ENCODE measurements at regions of chr19 and their contacts with region 1.

Region 1: DNA sequence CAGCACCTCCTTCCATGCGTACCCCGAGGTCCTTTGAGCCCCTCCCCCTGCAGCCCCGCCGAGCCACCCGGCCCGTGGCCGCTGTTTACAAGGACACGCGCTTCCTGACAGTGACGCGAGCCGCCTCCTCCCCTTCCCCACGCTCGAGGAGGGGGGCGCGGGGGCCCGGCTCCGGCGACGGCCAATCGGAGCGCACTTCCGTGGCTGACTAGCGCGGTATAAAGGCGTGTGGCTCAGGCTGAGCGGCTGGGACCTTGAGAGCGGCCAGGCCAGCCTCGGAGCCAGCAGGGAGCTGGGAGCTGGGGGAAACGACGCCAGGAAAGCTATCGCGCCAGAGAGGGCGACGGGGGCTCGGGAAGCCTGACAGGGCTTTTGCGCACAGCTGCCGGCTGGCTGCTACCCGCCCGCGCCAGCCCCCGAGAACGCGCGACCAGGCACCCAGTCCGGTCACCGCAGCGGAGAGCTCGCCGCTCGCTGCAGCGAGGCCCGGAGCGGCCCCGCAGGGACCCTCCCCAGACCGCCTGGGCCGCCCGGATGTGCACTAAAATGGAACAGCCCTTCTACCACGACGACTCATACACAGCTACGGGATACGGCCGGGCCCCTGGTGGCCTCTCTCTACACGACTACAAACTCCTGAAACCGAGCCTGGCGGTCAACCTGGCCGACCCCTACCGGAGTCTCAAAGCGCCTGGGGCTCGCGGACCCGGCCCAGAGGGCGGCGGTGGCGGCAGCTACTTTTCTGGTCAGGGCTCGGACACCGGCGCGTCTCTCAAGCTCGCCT is at the start of gene JUNB:
- DNase-seq: no peak
- ATAC-seq: peak; percentile 60
- H3K4me3 ChIP-seq: peak within 1 kb of the TSS; percentile 75 to 79
- H3K27ac ChIP-seq: peak within 1 kb of the TSS; percentile 87
- H3K4me1 ChIP-seq: peaks cover 41% of the 10 kb centered on the region
- H3K27me3 ChIP-seq: no peaks in the 10 kb centered on the region
- CTCF ChIP-seq: no peak
- total RNA-seq, gene JUNB: 49.7 TPM

Region 2: GRCh38 chr19:12551060-12551832 is 240.2 kb before region 1 on chr19 and contains the start of gene ZNF564:
- CTCF ChIA-PET with region 1: no interaction called
- POLR2A ChIA-PET with region 1: no interaction called
- in situ Hi-C with region 1: no loop called
- intact Hi-C with region 1: no loop called
- DNase-seq: peak; percentile 89
- ATAC-seq: peak; percentile 99
- H3K4me3 ChIP-seq: peak within 1 kb of the TSS; percentile 73 to 95
- H3K27ac ChIP-seq: peak within 1 kb of the TSS; percentile 93
- H3K4me1 ChIP-seq: peaks cover 5% of the 10 kb centered on the region; the same call in 1 of the 2 replicates
- H3K27me3 ChIP-seq: no peaks in the 10 kb centered on the region
- CTCF ChIP-seq: no peak
- total RNA-seq, gene ZNF564: 5.7 TPM

Region 3: GRCh38 chr19:12757544-12758274 is 33.7 kb before region 1 on chr19:
- CTCF ChIA-PET with region 1: interaction called, 11 read pairs
- POLR2A ChIA-PET with region 1: no interaction called
- in situ Hi-C with region 1: no loop called
- intact Hi-C with region 1: loop called (anchors 5 kb)
- DNase-seq: no peak
- ATAC-seq: peak; percentile 93
- H3K4me3 ChIP-seq: peak overlapping the region; percentile 44 to 55
- H3K27ac ChIP-seq: peak overlapping the region; percentile 59; the same call in 1 of the 2 replicates
- H3K4me1 ChIP-seq: no peaks in the 10 kb centered on the region
- H3K27me3 ChIP-seq: no peaks in the 10 kb centered on the region
- CTCF ChIP-seq: peak; percentile 96

Region 4: DNA sequence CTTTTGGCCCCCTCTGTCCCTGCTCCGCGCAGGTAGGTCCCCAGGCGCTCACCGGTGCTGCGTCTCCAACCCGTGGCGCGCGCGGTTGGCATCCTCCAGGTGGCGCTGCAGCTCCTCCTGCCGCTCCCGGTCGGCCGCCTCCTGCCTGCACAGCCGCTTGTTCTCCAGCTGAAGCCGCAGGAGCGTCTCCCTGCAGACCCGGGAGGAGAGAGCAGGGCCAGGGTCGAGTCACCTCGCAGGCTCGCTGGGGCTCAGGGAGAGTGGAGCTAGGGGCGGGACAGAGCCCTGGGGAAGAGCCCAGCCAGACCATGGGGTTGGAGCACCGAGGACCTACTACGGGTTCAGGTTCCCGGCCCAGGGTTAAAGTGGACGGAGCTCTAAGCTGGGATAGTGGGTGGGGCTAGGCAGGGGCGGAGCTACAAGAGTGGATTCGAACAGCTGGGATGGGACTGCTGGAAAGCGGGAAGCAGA is 25.3 kb before region 1 on chr19:
- CTCF ChIA-PET with region 1: interaction called, 37 read pairs
- POLR2A ChIA-PET with region 1: interaction called, 17 read pairs
- in situ Hi-C with region 1: no loop called
- intact Hi-C with region 1: loop called (anchors 5 kb)
- DNase-seq: no peak
- ATAC-seq: peak; percentile 98
- H3K4me3 ChIP-seq: peak overlapping the region; percentile 52 to 60
- H3K27ac ChIP-seq: peak overlapping the region; percentile 44; the same call in 1 of the 2 replicates
- H3K4me1 ChIP-seq: no peaks in the 10 kb centered on the region
- H3K27me3 ChIP-seq: no peaks in the 10 kb centered on the region
- CTCF ChIP-seq: peak; percentile 94

Region 5: GRCh38 chr19:12777217-12778016 is 14.0 kb before region 1 on chr19:
- CTCF ChIA-PET with region 1: interaction called, 23 read pairs
- POLR2A ChIA-PET with region 1: interaction called, 16 read pairs
- in situ Hi-C with region 1: no loop called
- intact Hi-C with region 1: no loop called
- DNase-seq: no peak
- ATAC-seq: peak; percentile 73
- H3K4me3 ChIP-seq: peak overlapping the region; percentile 53 to 81
- H3K27ac ChIP-seq: peak overlapping the region; percentile 87
- H3K4me1 ChIP-seq: peaks cover 16% of the 10 kb centered on the region
- H3K27me3 ChIP-seq: no peaks in the 10 kb centered on the region
- CTCF ChIP-seq: peak; percentile 94

Region 6: GRCh38 chr19:14472202-14472938 is 1680.9 kb after region 1 on chr19:
- CTCF ChIA-PET with region 1: no interaction called
- POLR2A ChIA-PET with region 1: interaction called, 10 read pairs
- in situ Hi-C with region 1: no loop called
- intact Hi-C with region 1: no loop called
- DNase-seq: no peak
- ATAC-seq: peak; percentile 65
- H3K4me3 ChIP-seq: no peak overlapping the region
- H3K27ac ChIP-seq: no peak overlapping the region
- H3K4me1 ChIP-seq: peaks cover 20% of the 10 kb centered on the region
- H3K27me3 ChIP-seq: no peaks in the 10 kb centered on the region
- CTCF ChIP-seq: peak; percentile 96